Common myeloid progenitor, CD34-positive (primary cell): ENCODE measurements at regions of chr17 and their contacts with region 1.

Region 1: GRCh38 chr17:64281962-64282727 is 19.1 kb upstream of the TEX2 start:
- DNase-seq: peak; percentile 88 to 93 (median 92)
- H3K4me3 ChIP-seq: peak overlapping the region in 1 of 7 experiments; percentile 30
- H3K27ac ChIP-seq: no peak overlapping the region
- H3K4me1 ChIP-seq: peaks cover 0 to 13% (median 4%) of the 10 kb centered on the region in 4 experiments
- H3K27me3 ChIP-seq: no peaks in the 10 kb centered on the region

Region 2: DNA sequence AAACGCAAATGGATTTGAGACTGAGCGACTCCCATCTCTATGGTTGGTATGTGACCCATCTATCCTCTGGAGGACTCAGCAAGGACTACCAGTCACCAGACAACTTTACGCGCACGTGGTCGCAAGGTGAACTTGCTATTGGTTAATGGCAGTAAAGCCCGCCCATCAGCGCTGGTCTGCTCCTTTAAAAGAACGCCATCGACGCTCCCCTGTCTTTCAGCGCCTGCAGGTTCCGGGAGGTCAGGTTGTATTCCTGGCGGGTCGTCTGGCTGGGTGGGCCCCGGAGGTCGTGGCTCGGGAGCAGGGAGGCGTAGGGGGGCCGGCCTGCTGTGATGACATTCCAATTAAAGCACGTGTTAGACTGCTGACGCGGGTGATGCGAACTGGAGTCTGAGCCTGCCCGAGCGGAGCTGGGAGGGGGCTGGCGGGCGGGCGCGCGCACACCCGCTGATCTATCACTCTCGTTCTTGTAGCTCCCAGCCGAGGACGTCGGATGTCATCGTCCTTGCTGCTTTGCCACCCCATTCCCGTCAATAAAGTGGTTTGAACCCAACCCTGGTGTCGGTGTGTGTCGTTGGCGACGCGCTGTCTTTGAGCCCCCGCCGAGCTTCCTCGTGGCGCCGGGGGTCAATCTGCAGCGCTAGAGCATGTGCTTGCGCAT is 136.3 kb before region 1 on chr17:
- CTCF ChIA-PET with region 1: interaction called, 26 read pairs
- POLR2A ChIA-PET with region 1: interaction called, 8 read pairs
- DNase-seq: peak; percentile 100
- H3K4me3 ChIP-seq: peak overlapping the region; percentile 54 to 96 (median 92)
- H3K27ac ChIP-seq: peak overlapping the region; percentile 82 to 92
- H3K4me1 ChIP-seq: peaks cover 13 to 29% (median 20%) of the 10 kb centered on the region in 4 experiments
- H3K27me3 ChIP-seq: no peaks in the 10 kb centered on the region

Region 3: DNA sequence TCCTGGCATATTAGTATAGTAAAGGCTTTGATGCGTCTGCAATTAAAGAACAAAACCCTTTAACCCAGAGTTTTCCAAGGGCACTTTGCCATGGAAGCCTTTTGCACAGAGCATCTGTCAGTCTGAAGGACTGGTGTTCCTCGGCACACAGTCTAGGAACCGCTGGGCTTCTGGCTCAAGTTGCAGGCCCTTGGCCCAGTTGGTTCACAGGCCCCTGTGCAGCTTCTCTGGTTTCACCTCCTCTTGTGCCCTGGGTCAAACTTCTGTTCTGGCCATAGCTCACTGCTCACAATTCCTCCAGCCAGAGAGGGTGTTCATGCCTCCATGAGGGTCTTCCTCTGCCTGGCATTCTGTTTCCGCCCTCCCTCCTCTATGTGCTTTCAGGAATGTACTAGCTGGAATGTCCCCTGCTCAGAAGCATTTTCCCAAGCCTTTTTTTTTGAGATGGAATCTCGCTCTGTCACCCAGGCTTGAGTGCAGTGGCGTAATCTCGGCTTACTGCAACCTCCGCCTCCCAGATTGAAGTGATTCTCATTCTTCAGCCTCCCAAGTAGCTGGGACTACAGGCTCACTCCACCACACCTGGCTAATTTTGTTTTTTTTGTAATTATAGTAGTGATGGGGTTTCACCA is 15.4 kb after region 1 on chr17:
- CTCF ChIA-PET with region 1: interaction called, 10 read pairs
- POLR2A ChIA-PET with region 1: no interaction called
- DNase-seq: no peak
- H3K4me3 ChIP-seq: no peak overlapping the region
- H3K27ac ChIP-seq: no peak overlapping the region
- H3K4me1 ChIP-seq: no peaks in the 10 kb centered on the region
- H3K27me3 ChIP-seq: no peaks in the 10 kb centered on the region